ENCODE measurements at regions of chr9 and their contacts with region 1.

Region 1: DNA sequence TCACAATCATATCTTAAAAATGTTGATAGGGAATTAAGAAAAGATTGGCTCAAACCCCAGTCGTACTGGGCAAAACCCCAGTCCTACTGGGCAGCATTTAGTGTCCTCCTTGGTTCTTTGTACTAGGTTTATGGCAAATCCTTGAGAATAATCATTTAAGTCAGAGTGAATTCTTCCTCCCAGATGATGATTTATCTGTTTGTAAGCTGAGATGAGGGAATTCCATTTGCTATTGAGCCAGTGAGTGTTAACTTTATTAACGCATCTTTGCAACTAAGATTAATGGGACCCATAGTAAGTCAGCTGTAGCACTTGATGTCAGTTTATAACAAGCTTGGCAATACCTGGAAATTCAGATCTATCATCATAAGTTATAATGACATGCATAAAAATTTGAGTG is 821.8 kb upstream of the DMAC1 start:
- DNase-seq: no peak
- H3K4me3 Mint-ChIP-seq: no peak overlapping the region
- H3K27ac Mint-ChIP-seq: no peak overlapping the region
- H3K4me1 Mint-ChIP-seq: no peaks in the 10 kb centered on the region
- H3K27me3 Mint-ChIP-seq: no peaks in the 10 kb centered on the region

Region 2: DNA sequence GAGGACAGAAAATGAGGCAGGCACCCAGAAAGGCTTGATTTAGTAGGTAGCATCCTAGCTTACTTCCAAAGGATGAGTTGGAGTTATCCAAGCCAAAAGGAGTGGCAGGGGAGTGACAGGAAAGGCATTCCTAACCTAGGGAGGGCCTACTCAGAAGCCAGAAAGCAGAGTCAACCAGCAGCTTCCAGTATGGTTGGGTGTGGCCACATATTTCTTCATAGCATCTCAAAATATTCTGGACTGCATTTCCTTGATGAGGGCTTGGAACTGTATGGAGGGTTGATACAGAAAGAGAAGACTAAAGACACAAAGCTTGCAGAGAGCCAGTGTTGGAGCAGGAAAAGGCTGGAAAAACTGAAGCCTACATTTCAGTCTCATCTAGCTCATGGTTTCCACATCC is 165.1 kb before region 1 on chr9:
- intact Hi-C with region 1: no loop called
- DNase-seq: no peak
- H3K4me3 Mint-ChIP-seq: no peak overlapping the region
- H3K27ac Mint-ChIP-seq: no peak overlapping the region
- H3K4me1 Mint-ChIP-seq: no peaks in the 10 kb centered on the region
- H3K27me3 Mint-ChIP-seq: no peaks in the 10 kb centered on the region

Region 3: GRCh38 chr9:8570776-8571175 is 50.6 kb before region 1 on chr9:
- intact Hi-C with region 1: loop called (anchors 5 kb)
- DNase-seq: no peak
- H3K4me3 Mint-ChIP-seq: no peak overlapping the region
- H3K27ac Mint-ChIP-seq: no peak overlapping the region
- H3K4me1 Mint-ChIP-seq: no peaks in the 10 kb centered on the region
- H3K27me3 Mint-ChIP-seq: no peaks in the 10 kb centered on the region